Activated CD4-positive, alpha-beta T cell treated with anti-CD3 and anti-CD28 coated beads for 36 hours (primary cell): ENCODE measurements at regions of chr21 and their contacts with region 1.

Region 1: DNA sequence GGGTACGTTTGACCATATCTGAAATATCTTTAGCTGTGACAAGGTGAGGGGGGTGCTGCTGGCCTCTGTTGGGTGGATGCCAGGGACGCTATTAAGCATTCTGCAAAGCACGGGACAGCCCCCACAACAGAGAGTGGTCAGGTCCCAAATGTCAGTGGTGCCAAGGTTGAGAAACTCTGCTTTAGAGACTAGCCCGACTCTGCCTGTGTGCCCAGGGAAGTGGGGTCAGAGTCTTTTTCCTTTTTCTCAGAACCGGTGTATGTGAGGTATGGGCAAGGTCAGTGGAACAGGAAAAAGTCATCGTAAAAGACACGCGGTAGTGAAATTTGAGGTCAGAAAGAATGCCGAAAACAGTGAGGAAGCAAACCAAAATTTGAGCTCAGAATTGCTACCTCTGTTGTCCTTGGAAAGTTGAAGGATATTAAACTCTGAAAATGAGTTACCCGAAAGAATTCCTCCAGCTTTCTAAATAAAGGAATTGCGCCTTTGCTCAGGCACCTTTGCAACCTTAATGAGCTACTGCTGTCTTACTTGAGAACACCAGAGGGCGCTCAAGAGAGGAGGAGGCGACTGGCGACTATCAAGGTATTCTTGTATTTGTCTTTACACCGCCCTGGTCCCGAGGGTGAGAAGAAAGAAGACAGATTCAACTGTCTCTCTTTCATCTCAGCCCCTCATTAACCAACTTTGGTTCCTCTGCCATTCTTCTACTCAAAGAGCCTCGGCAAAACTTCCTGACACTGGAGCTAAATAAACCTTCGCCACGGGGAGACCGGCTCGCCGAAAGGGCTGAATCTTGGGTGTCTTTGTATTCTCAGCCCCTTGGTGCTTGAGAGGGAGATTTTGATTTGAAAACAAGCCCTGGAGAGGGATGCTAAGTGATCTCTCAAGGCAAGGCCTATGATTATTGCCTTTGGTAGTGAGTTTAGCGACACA is 85.4 kb upstream of the OLIG2 start:
- DNase-seq: peak; percentile 56
- ATAC-seq: peak; percentile 74
- H3K4me3 Mint-ChIP-seq: no peak overlapping the region
- H3K27ac Mint-ChIP-seq: no peak overlapping the region
- H3K4me1 Mint-ChIP-seq: peaks cover 4% of the 10 kb centered on the region
- H3K27me3 Mint-ChIP-seq: no peaks in the 10 kb centered on the region

Region 2: DNA sequence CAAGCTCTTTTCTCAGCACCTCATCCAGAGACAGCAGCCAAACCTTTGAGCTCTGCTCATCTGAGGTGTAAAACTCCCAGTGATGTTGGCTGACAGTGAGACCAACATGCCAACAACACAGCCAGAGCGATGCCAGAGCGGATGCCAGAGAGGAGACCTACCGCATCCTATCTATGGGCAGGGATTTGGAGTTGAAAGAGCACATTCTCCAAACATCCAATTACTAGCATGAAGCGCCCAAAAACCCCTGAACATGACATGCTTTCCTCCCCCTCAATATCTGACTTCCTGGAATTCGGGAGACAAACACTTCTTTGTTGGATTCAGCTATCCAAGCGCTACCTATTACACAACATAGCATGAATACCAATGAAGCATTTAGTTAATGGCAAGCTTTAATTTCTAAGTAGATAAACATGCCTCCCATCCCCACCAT is 145.7 kb before region 1 on chr21:
- CTCF ChIA-PET with region 1: no interaction called
- POLR2A ChIA-PET with region 1: no interaction called
- intact Hi-C with region 1: no loop called
- DNase-seq: no peak
- ATAC-seq: no peak
- H3K4me3 Mint-ChIP-seq: no peak overlapping the region
- H3K27ac Mint-ChIP-seq: no peak overlapping the region
- H3K4me1 Mint-ChIP-seq: peaks cover 2% of the 10 kb centered on the region
- H3K27me3 Mint-ChIP-seq: no peaks in the 10 kb centered on the region

Region 3: DNA sequence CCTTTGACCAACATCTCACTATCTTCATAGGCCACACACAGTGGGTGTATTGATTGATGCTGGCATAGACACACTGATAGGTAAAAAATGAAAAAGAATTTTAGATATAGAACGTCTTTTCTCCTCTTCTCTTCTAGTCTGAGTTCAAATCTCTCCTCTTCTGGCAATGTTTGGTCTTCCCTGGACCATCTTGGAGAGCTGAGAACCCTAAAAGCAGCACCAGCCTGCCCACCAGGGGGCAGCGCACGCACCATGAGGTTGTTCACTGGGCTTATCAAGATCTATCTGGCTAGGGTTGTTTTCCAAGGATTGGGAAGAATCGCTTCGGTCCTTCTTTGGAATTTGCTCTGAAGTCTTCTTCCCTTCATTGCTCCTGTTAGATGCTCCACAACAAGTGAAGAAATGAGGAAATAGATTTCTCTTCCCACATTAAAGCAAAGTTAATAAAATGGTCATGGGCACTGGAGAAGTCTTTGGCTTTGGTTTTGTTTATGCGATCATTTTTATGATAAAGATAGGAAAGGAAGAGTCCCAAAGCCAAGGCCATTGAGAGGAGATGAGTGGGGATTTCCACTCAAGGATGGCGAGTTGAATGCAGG is 18.6 kb before region 1 on chr21:
- CTCF ChIA-PET with region 1: interaction called, 22 read pairs
- POLR2A ChIA-PET with region 1: no interaction called
- intact Hi-C with region 1: no loop called
- DNase-seq: peak; percentile 72
- ATAC-seq: peak; percentile 51
- H3K4me3 Mint-ChIP-seq: no peak overlapping the region
- H3K27ac Mint-ChIP-seq: no peak overlapping the region
- H3K4me1 Mint-ChIP-seq: no peaks in the 10 kb centered on the region
- H3K27me3 Mint-ChIP-seq: no peaks in the 10 kb centered on the region

Region 4: DNA sequence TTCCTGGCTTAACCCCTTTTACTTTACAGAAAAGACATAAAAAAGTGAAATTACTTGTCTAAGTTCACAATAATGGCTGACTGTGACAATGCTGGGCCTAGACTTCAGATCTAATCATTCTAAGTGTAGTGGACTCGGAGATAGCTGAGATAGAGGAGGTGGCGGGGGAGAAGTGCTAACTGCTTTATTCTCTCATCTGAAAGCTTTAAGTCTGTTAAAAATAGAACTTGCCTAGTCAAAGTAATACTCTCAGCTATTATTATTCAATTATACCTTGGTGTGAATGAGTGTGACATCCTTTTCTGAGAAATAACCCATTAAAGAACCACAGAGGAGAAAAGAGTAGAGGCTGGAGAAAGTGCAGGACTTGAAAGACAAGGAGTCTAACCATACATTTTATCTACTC is 10.7 kb before region 1 on chr21:
- CTCF ChIA-PET with region 1: interaction called, 22 read pairs
- POLR2A ChIA-PET with region 1: no interaction called
- intact Hi-C with region 1: no loop called
- DNase-seq: peak; percentile 12
- ATAC-seq: peak; percentile 21
- H3K4me3 Mint-ChIP-seq: peak overlapping the region; percentile 6
- H3K27ac Mint-ChIP-seq: peak overlapping the region; percentile 48
- H3K4me1 Mint-ChIP-seq: peaks cover 35% of the 10 kb centered on the region
- H3K27me3 Mint-ChIP-seq: peaks cover 2% of the 10 kb centered on the region